ENCODE measurements at regions of chr14 and their contacts with region 1.

Region 1: GRCh38 chr14:101809671-101810514 is 48.4 kb downstream of the PPP2R5C start:
- DNase-seq: peak; percentile 93
- ATAC-seq: peak; percentile 87
- H3K4me3 Mint-ChIP-seq: peak overlapping the region; percentile 96
- H3K27ac Mint-ChIP-seq: peak overlapping the region; percentile 100
- H3K4me1 Mint-ChIP-seq: peaks cover 45% of the 10 kb centered on the region
- H3K27me3 Mint-ChIP-seq: no peaks in the 10 kb centered on the region

Region 2: GRCh38 chr14:101721951-101722661 is 87.8 kb before region 1 on chr14:
- CTCF ChIA-PET with region 1: interaction called, 3 read pairs
- POLR2A ChIA-PET with region 1: interaction called, 14 read pairs
- DNase-seq: peak; percentile 85
- ATAC-seq: peak; percentile 91
- H3K4me3 Mint-ChIP-seq: peak overlapping the region; percentile 76
- H3K27ac Mint-ChIP-seq: peak overlapping the region; percentile 100
- H3K4me1 Mint-ChIP-seq: peaks cover 30% of the 10 kb centered on the region
- H3K27me3 Mint-ChIP-seq: peaks cover 2% of the 10 kb centered on the region

Region 3: DNA sequence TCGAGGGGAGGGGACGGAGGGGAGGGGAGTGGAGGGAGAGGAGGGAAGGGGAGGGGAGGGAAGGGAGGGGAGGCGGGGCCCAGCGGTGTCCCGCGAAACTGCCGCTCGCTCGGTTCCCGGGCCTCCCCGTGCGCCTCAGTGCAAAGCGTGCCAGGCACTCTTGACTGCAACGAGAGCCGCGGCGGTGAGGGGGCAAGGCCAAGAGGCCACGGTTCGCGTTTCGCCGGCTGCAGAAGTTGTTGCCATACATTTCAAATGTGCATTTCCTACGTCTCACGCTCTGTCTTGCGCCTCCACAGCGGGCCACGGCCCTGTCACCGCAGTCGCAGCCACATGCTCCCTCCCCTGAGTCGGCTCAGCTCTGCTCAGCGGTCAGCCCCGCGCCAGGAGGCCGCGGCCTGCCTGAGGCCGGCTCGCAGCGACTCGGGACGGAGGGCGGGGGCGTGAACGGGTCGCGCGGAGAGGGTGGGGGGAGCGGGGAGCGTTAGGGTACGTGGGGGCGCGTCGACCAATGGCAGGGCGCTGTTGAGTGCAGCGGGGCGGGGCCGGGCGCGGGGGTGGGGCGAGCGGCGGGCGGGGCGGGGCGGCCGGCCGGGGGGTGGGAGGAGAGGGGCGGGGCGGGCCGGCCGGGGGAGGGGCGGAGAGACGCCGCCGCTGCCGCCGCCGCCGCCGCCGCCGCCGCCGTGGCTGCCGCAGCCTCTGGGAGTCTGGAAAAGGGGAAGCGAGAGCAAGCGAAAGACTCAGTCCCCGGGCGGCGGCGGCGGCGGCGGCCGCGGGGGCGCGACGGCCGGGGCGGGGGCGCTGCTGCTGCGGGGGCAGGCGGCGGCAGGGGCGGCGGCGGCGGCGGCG is 48.6 kb before region 1 on chr14 and contains the start of gene PPP2R5C:
- CTCF ChIA-PET with region 1: no interaction called
- POLR2A ChIA-PET with region 1: interaction called, 12 read pairs
- DNase-seq: peak; percentile 91
- ATAC-seq: peak; percentile 84
- H3K4me3 Mint-ChIP-seq: peak within 1 kb of the TSS; percentile 82
- H3K27ac Mint-ChIP-seq: peak within 1 kb of the TSS; percentile 80
- H3K4me1 Mint-ChIP-seq: peaks cover 12% of the 10 kb centered on the region
- H3K27me3 Mint-ChIP-seq: peaks cover 11% of the 10 kb centered on the region
- total RNA-seq, gene PPP2R5C: 218 to 223 TPM

Region 4: GRCh38 chr14:101774006-101774795 is 35.7 kb before region 1 on chr14:
- CTCF ChIA-PET with region 1: interaction called, 49 read pairs
- POLR2A ChIA-PET with region 1: interaction called, 16 read pairs
- DNase-seq: no peak
- ATAC-seq: no peak
- H3K4me3 Mint-ChIP-seq: no peak overlapping the region
- H3K27ac Mint-ChIP-seq: no peak overlapping the region
- H3K4me1 Mint-ChIP-seq: peaks cover 9% of the 10 kb centered on the region
- H3K27me3 Mint-ChIP-seq: peaks cover 3% of the 10 kb centered on the region

Region 5: GRCh38 chr14:101781240-101782061 is 28.4 kb before region 1 on chr14:
- CTCF ChIA-PET with region 1: interaction called, 3 read pairs
- POLR2A ChIA-PET with region 1: interaction called, 12 read pairs
- DNase-seq: peak; percentile 49
- ATAC-seq: peak; percentile 81
- H3K4me3 Mint-ChIP-seq: peak overlapping the region; percentile 43
- H3K27ac Mint-ChIP-seq: no peak overlapping the region
- H3K4me1 Mint-ChIP-seq: no peaks in the 10 kb centered on the region
- H3K27me3 Mint-ChIP-seq: peaks cover 20% of the 10 kb centered on the region

Region 6: GRCh38 chr14:101791919-101792572 is 17.8 kb before region 1 on chr14:
- CTCF ChIA-PET with region 1: interaction called, 7 read pairs
- POLR2A ChIA-PET with region 1: interaction called, 25 read pairs
- DNase-seq: no peak
- ATAC-seq: peak; percentile 84
- H3K4me3 Mint-ChIP-seq: peak overlapping the region; percentile 62
- H3K27ac Mint-ChIP-seq: peak overlapping the region; percentile 83
- H3K4me1 Mint-ChIP-seq: peaks cover 11% of the 10 kb centered on the region
- H3K27me3 Mint-ChIP-seq: no peaks in the 10 kb centered on the region

Region 7: DNA sequence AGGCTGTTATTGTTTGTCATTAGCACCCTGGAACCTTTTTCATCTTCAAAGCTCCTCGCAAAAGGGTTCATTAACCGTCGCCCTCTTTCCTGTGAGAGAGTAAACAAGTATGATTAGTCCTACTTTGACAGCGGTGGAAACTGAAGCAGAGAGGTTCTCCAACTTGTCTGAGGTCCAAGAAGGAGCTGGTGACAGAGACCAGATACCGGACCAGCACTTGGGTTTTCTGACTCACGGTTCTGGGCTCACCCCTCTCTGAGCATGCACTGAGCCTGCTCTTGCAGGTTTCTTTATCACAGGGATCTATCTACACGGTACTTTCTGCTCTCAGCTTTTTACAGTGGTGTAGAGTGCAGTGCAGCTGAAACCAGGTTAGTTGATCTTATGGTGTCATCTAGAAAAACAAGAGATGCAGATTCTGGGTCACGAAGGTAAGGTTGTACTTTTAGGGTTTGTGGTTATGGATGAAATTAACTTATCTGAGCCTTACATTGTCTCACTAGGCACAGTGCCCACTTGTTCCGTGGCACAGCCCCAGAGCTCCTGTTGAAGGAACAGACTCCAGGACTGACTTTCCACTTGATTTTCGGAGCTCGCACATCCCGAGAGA is 13.7 kb after region 1 on chr14:
- CTCF ChIA-PET with region 1: interaction called, 57 read pairs
- POLR2A ChIA-PET with region 1: interaction called, 820 read pairs
- DNase-seq: peak; percentile 72
- ATAC-seq: peak; percentile 62
- H3K4me3 Mint-ChIP-seq: peak overlapping the region; percentile 69
- H3K27ac Mint-ChIP-seq: peak overlapping the region; percentile 96
- H3K4me1 Mint-ChIP-seq: peaks cover 84% of the 10 kb centered on the region
- H3K27me3 Mint-ChIP-seq: no peaks in the 10 kb centered on the region

Measured in activated CD8-positive, alpha-beta T cell treated with anti-CD3 and anti-CD28 coated beads, Interleukin-2, amount 10 ng/mL, durations not matched to agents 7 days and 5 days (primary cell).